ENCODE measurements at regions of chr1 and their contacts with region 1.

Region 1: DNA sequence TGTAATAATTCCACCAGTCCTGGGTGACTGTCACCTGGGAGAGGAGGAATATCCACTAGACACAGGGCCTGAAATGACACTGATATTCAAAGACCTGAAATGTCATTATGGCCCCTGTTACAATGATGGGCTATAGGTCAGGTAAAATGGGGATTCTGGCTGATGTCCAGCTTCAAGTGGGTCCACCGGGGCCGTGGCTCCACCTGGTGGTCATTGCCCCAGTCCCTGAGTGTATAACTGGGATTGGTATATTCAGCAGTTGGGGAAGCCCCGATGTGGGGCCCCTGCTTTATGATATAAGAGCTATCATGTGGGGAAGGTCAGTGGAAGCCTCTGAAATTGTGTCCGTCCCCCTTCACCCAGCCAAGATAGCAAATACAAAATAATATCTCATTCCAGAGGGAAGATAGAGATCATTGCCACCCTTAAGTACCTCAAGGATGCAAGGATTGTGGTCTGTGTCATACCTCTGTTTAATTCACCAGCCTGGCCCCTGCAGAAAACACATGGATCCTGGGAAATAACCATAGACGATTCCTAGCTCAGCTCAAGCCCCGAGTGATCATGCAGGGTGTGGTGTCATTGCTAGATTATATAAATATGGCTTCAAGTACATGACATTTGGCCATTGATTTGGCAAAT is 19.4 kb downstream of the PLEKHO1 start:
- DNase-seq: peak; percentile 86
- H3K4me3 Mint-ChIP-seq: no peak overlapping the region
- H3K27ac Mint-ChIP-seq: no peak overlapping the region
- H3K4me1 Mint-ChIP-seq: peaks cover 8% of the 10 kb centered on the region
- H3K27me3 Mint-ChIP-seq: peaks cover 14% of the 10 kb centered on the region
- CTCF ChIP-seq: peak; percentile 85

Region 2: GRCh38 chr1:149962123-149962548 is 206.9 kb before region 1 on chr1:
- CTCF ChIA-PET with region 1: no interaction called
- intact Hi-C with region 1: loop called (anchors 5 kb)
- DNase-seq: peak; percentile 64
- H3K4me3 Mint-ChIP-seq: no peak overlapping the region
- H3K27ac Mint-ChIP-seq: no peak overlapping the region
- H3K4me1 Mint-ChIP-seq: no peaks in the 10 kb centered on the region
- H3K27me3 Mint-ChIP-seq: no peaks in the 10 kb centered on the region
- CTCF ChIP-seq: peak; percentile 44

Region 3: GRCh38 chr1:150072959-150073358 is 96.1 kb before region 1 on chr1:
- CTCF ChIA-PET with region 1: interaction called, 7 read pairs
- intact Hi-C with region 1: loop called (anchors 1 kb)
- DNase-seq: no peak
- H3K4me3 Mint-ChIP-seq: no peak overlapping the region
- H3K27ac Mint-ChIP-seq: no peak overlapping the region
- H3K4me1 Mint-ChIP-seq: peaks cover 19% of the 10 kb centered on the region
- H3K27me3 Mint-ChIP-seq: no peaks in the 10 kb centered on the region
- CTCF ChIP-seq: peak; percentile 14

Region 4: DNA sequence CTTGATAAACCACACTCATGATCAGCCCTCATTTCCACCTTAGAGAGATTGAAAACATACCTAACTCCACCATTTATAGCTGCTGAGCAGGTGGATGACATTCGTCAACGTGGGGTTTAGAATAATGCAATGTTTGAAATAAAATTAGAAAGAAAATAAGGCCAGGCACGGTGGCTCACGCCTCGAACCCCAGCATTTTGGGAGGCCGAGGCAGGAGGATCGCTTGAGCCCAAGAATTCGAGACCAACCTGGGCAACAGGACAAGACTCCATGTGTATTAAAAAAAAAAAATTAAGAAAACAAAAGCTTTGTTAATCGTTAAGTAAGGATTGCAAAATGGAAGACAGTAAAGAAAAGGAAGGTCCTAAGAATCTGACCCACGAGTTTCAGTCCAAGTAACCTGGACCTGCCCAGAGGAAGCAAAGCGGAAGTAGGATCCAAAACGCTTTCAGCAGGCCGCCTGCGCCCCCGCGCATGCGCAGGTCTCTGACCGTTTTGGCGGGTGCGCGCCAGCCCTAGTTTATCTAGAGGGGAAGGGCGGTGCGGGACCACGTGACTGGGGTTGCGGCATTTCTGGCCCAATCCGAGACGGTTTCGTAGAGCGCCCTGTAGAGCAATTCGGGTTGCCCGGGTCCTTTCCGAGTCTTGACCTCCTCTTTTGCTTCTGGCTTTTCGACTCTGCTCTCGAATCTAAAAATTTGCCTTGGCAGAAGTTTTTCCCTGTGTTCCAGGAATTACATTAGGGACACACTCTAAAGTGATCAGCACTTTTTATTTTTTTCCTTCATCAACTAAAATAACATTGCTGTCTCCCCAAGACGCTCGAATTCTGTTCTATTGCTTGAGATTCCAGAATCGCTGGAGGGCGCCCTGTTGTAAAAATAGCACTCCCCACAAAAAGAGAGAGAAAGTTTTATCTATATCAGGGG is 44.4 kb after region 1 on chr1:
- CTCF ChIA-PET with region 1: no interaction called
- intact Hi-C with region 1: no loop called
- DNase-seq: peak; percentile 91
- H3K4me3 Mint-ChIP-seq: peak overlapping the region; percentile 72
- H3K27ac Mint-ChIP-seq: peak overlapping the region; percentile 82
- H3K4me1 Mint-ChIP-seq: peaks cover 15% of the 10 kb centered on the region
- H3K27me3 Mint-ChIP-seq: no peaks in the 10 kb centered on the region
- CTCF ChIP-seq: no peak

Measured in Calu3 (cell line).